Breast epithelium (tissue), 4 donors: ENCODE measurements at regions of chr4 and their contacts with region 1.

Region 1: GRCh38 chr4:24174602-24175001 is 284.8 kb upstream of the PPARGC1A start:
- DNase-seq: no peak
- H3K4me3 ChIP-seq: no peak overlapping the region
- H3K27ac ChIP-seq: no peak overlapping the region
- H3K4me1 ChIP-seq: no peaks in the 10 kb centered on the region
- H3K27me3 ChIP-seq: no peaks in the 10 kb centered on the region
- CTCF ChIP-seq: no peak
- POLR2A ChIP-seq: no peak

Region 2: GRCh38 chr4:24126776-24127175 is 47.8 kb before region 1 on chr4:
- intact Hi-C with region 1: loop called (anchors 5 kb)
- DNase-seq: no peak
- H3K4me3 ChIP-seq: no peak overlapping the region
- H3K27ac ChIP-seq: no peak overlapping the region
- H3K4me1 ChIP-seq: no peaks in the 10 kb centered on the region
- H3K27me3 ChIP-seq: no peaks in the 10 kb centered on the region
- CTCF ChIP-seq: no peak
- POLR2A ChIP-seq: no peak

Region 3: GRCh38 chr4:24896977-24897376 is 722.4 kb after region 1 on chr4:
- intact Hi-C with region 1: no loop called
- DNase-seq: no peak
- H3K4me3 ChIP-seq: no peak overlapping the region
- H3K27ac ChIP-seq: no peak overlapping the region
- H3K4me1 ChIP-seq: no peaks in the 10 kb centered on the region
- H3K27me3 ChIP-seq: no peaks in the 10 kb centered on the region
- CTCF ChIP-seq: no peak
- POLR2A ChIP-seq: no peak